ENCODE measurements at regions of chr3 and their contacts with region 1.

Region 1: DNA sequence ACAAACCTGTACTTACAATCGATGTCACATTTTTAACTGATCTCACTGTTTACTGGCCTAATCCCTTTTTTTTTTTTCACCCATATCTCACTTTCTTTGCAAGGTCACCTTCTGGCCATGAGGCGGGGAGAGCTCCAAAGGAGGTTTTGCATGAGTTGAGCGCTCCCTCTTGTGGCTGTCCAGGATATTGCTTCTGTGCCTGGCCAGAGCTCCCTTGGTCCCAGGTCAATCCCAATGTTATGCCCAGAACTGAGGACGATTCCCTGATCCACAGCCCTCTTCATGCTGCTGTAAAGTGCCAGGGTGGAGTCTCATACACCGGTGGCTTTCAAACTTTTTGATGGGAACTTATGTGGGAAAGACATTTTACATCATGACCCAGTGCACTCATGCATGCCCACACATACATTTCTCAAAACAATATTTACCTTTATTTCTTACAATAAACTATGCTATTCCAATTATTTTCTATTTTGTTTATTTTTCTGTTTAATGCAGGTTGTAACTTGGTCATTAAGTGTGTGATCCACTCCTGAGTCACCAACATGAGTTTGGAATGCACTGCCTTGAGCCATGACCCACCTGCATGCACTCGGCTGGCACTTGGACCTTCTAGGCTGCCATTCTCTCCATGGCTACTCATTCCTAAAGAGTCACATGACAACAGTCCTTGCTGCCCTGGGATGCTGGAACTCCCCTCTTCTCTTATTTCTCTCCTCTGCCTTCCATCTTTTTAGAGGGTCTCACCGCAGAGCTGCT is 9.6 kb upstream of the SST start:
- DNase-seq: peak; percentile 32 to 75 (median 63)
- ATAC-seq: peak; percentile 54
- H3K4me3 ChIP-seq: no peak overlapping the region
- H3K4me3 Mint-ChIP-seq: no peak overlapping the region
- H3K27ac ChIP-seq: no peak overlapping the region
- H3K27ac Mint-ChIP-seq: no peak overlapping the region
- H3K4me1 ChIP-seq: no peaks in the 10 kb centered on the region
- H3K4me1 Mint-ChIP-seq: no peaks in the 10 kb centered on the region
- H3K27me3 ChIP-seq: no peaks in the 10 kb centered on the region
- H3K27me3 Mint-ChIP-seq: peaks cover 40% of the 10 kb centered on the region
- CTCF ChIP-seq: peak; percentile 94

Region 2: DNA sequence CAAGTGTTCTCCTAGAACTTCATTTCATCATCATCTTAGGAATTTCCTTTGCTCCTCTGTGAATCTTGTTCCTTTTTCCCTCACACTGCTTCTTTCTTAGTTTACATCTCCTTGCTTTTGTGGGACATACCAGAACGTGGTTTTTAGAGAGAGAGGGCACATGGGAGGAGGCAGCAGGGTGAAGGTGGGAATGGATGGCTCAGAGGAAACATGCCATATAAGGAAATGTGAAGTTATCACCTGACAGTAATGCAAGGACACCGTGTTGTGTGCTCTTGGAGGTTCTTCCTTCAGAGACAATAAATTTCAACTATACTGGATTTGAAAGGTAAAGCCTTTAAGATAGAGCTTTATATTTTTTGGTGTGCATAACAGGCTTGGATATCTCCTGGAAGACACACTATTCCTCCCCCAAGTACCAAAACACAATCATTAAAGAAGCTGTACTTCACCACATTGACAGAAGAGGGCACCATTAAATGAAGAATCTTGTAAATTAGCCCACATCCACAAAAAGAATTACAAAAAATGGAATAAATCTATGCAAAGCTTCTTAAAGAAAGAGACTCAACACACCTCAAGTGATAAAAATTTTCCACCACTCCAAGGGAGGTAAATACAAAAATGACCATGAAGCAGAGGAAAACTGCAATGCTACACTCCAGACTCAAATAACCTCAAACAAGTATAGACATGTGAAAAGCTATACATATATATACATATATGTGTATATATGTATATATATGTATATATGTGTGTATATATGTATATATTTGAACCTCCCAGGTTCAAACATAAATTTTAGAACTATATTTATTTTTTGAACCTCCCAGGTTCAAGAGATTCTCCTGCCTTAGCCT is 566.7 kb before region 1 on chr3:
- CTCF ChIA-PET with region 1: interaction called, 3 read pairs
- POLR2A ChIA-PET with region 1: no interaction called
- intact Hi-C with region 1: loop called in 1 of 2 experiments (anchors 10 kb)
- DNase-seq: peak in 2 of 9 experiments; percentile 61 to 70
- ATAC-seq: peak; percentile 58
- H3K4me3 ChIP-seq: no peak overlapping the region
- H3K4me3 Mint-ChIP-seq: no peak overlapping the region
- H3K27ac ChIP-seq: no peak overlapping the region
- H3K27ac Mint-ChIP-seq: no peak overlapping the region
- H3K4me1 ChIP-seq: no peaks in the 10 kb centered on the region
- H3K4me1 Mint-ChIP-seq: peaks cover 7% of the 10 kb centered on the region
- H3K27me3 ChIP-seq: no peaks in the 10 kb centered on the region
- H3K27me3 Mint-ChIP-seq: no peaks in the 10 kb centered on the region
- CTCF ChIP-seq: peak; percentile 81

Region 3: DNA sequence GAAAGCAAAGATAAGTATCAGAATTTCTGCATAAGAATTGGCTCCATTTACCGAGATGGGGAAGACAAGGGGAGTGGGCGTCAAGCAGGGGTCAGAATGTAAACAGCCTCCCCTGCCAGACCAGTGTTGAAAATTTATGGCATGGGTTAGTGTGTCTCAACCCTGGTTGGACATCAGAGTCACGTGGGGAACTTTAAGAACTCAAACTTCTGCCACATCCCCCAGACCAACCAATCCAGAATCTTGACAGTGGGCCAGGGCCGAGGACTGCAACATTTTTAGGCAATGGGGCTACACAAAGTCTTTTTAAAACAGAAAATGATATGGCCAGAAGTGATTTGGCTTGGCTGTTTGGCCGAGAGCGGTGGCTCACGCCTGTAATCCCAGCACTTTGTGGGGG is 373.9 kb before region 1 on chr3:
- CTCF ChIA-PET with region 1: interaction called, 15 read pairs
- POLR2A ChIA-PET with region 1: no interaction called
- intact Hi-C with region 1: no loop called
- DNase-seq: no peak
- ATAC-seq: no peak
- H3K4me3 ChIP-seq: no peak overlapping the region
- H3K4me3 Mint-ChIP-seq: no peak overlapping the region
- H3K27ac ChIP-seq: no peak overlapping the region
- H3K27ac Mint-ChIP-seq: no peak overlapping the region
- H3K4me1 ChIP-seq: no peaks in the 10 kb centered on the region
- H3K4me1 Mint-ChIP-seq: no peaks in the 10 kb centered on the region
- H3K27me3 ChIP-seq: peaks cover 0 to under 1% of the 10 kb centered on the region in 2 experiments
- H3K27me3 Mint-ChIP-seq: peaks cover 22% of the 10 kb centered on the region
- CTCF ChIP-seq: no peak

Region 4: GRCh38 chr3:187533797-187534196 is 146.0 kb before region 1 on chr3:
- CTCF ChIA-PET with region 1: no interaction called
- POLR2A ChIA-PET with region 1: no interaction called
- intact Hi-C with region 1: no loop called
- DNase-seq: no peak
- ATAC-seq: no peak
- H3K4me3 ChIP-seq: no peak overlapping the region
- H3K4me3 Mint-ChIP-seq: no peak overlapping the region
- H3K27ac ChIP-seq: no peak overlapping the region
- H3K27ac Mint-ChIP-seq: no peak overlapping the region
- H3K4me1 ChIP-seq: no peaks in the 10 kb centered on the region
- H3K4me1 Mint-ChIP-seq: no peaks in the 10 kb centered on the region
- H3K27me3 ChIP-seq: no peaks in the 10 kb centered on the region
- H3K27me3 Mint-ChIP-seq: peaks cover 16% of the 10 kb centered on the region
- CTCF ChIP-seq: no peak

Region 5: GRCh38 chr3:187662848-187663409 is 16.9 kb before region 1 on chr3:
- CTCF ChIA-PET with region 1: interaction called, 62 read pairs
- POLR2A ChIA-PET with region 1: no interaction called
- intact Hi-C with region 1: no loop called
- DNase-seq: no peak
- ATAC-seq: no peak
- H3K4me3 ChIP-seq: no peak overlapping the region
- H3K4me3 Mint-ChIP-seq: no peak overlapping the region
- H3K27ac ChIP-seq: no peak overlapping the region
- H3K27ac Mint-ChIP-seq: no peak overlapping the region
- H3K4me1 ChIP-seq: no peaks in the 10 kb centered on the region
- H3K4me1 Mint-ChIP-seq: no peaks in the 10 kb centered on the region
- H3K27me3 ChIP-seq: peaks cover 0 to under 1% of the 10 kb centered on the region in 2 experiments
- H3K27me3 Mint-ChIP-seq: peaks cover 32% of the 10 kb centered on the region
- CTCF ChIP-seq: no peak

Region 6: GRCh38 chr3:187714404-187714979 is 34.7 kb after region 1 on chr3:
- CTCF ChIA-PET with region 1: interaction called, 20 read pairs
- POLR2A ChIA-PET with region 1: no interaction called
- intact Hi-C with region 1: loop called (anchors 1 kb)
- DNase-seq: peak; percentile 43 to 82 (median 67)
- ATAC-seq: peak; percentile 92
- H3K4me3 ChIP-seq: no peak overlapping the region
- H3K4me3 Mint-ChIP-seq: no peak overlapping the region
- H3K27ac ChIP-seq: no peak overlapping the region
- H3K27ac Mint-ChIP-seq: no peak overlapping the region
- H3K4me1 ChIP-seq: no peaks in the 10 kb centered on the region
- H3K4me1 Mint-ChIP-seq: peaks cover 12% of the 10 kb centered on the region
- H3K27me3 ChIP-seq: no peaks in the 10 kb centered on the region
- H3K27me3 Mint-ChIP-seq: no peaks in the 10 kb centered on the region
- CTCF ChIP-seq: peak; percentile 98

Region 7: DNA sequence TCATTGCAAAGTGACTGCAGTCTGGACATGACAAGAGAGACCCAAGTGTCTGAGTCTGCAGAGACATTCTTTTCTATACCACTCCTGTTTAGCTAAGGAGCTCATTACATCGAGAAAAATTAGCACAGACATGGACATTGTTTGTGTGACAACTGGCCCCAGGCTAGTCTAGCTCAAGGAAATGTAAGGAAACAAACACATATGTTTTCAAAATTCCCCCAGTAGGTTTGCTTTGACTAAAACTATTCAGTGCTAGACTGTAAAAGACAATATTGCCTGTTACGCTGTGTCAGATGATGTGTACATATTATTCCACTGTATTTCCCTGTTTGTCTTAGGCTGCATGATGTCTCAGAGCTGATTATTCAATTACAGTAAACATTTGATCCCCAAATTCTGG is 1532.9 kb after region 1 on chr3:
- CTCF ChIA-PET with region 1: no interaction called
- POLR2A ChIA-PET with region 1: no interaction called
- intact Hi-C with region 1: no loop called
- DNase-seq: no peak
- ATAC-seq: no peak
- H3K4me3 ChIP-seq: no peak overlapping the region
- H3K4me3 Mint-ChIP-seq: no peak overlapping the region
- H3K27ac ChIP-seq: no peak overlapping the region
- H3K27ac Mint-ChIP-seq: no peak overlapping the region
- H3K4me1 ChIP-seq: no peaks in the 10 kb centered on the region
- H3K4me1 Mint-ChIP-seq: no peaks in the 10 kb centered on the region
- H3K27me3 ChIP-seq: no peaks in the 10 kb centered on the region
- H3K27me3 Mint-ChIP-seq: no peaks in the 10 kb centered on the region
- CTCF ChIP-seq: no peak